Heart left ventricle (tissue), 16 donors: ENCODE measurements at regions of chr1 and their contacts with region 1.

Region 1: GRCh38 chr1:154863315-154864174 is 6.5 kb downstream of the KCNN3 start:
- DNase-seq: peak in 1 of 5 donors; percentile 48
- ATAC-seq: peak in 2 of 4 donors; percentile 53 to 65
- H3K4me3 ChIP-seq: no peak overlapping the region
- H3K27ac ChIP-seq: peak overlapping the region in 1 of 12 donors; percentile 52
- H3K4me1 ChIP-seq: peaks cover 3 to 46% (median 25%) of the 10 kb centered on the region in 12 donors
- H3K27me3 ChIP-seq: peaks cover 0 to 4% (median 0%) of the 10 kb centered on the region in 9 donors
- CTCF ChIP-seq: peak; percentile 32 to 70 (median 56)
- POLR2A ChIP-seq: no peak

Region 2: GRCh38 chr1:154760469-154760933 is 103.0 kb before region 1 on chr1:
- intact Hi-C with region 1: loop called in 3 of 10 experiments (anchors 5 kb)
- DNase-seq: peak; percentile 43 to 88 (median 58)
- ATAC-seq: peak in 3 of 4 donors; percentile 82 to 92 (median 91)
- H3K4me3 ChIP-seq: peak overlapping the region; percentile 13 to 58 (median 44)
- H3K27ac ChIP-seq: peak overlapping the region in 1 of 12 donors; percentile 57
- H3K4me1 ChIP-seq: peaks cover 0 to 29% (median 17%) of the 10 kb centered on the region in 12 donors
- H3K27me3 ChIP-seq: peaks cover 0 to 33% (median 0%) of the 10 kb centered on the region in 9 donors
- CTCF ChIP-seq: peak; percentile 66 to 83 (median 74)
- POLR2A ChIP-seq: no peak

Region 3: DNA sequence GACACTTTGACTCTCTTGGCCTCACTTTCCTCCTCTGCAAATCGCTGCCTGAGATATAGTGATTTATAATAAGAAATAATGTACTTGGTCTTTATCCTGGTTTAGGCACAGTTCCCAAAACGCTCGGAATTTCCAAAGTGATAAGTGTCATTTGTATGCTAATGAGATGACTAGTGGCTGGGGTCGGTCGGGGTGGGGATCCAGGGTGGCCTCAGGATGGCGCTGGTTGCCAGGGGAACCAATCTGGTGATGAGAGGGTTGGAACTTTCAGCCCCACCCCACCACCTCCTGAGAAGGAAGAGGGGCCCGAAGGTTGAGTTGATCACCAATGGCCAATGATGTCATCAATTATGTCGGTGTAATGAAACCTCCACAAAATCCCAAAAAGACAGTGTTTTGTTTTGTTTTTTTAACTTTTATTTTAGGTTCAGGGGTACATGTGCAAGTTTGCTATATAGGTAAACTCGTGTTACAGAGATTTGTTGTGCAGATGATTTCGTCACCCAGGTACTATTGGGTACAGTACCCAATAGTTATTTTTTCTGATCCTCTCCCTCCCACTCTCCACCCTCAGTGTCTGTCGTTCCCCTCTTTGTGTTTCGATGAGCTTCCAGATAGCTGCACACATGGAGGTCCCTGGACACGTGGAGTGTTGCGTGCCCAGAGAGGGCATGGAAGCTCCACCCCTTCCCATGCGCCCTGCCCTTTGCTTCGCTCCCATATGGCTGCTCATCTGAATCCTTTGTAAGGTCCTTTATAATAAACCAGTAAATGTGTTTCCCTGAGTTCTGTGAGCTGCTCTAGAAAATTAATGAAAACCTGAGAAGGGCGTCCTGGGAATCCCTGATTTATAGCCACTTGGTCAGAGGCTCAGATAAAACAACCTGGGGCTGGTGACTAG is 90.7 kb before region 1 on chr1:
- intact Hi-C with region 1: loop called in 3 of 10 experiments (anchors 5 kb)
- DNase-seq: no peak
- ATAC-seq: no peak
- H3K4me3 ChIP-seq: no peak overlapping the region
- H3K27ac ChIP-seq: no peak overlapping the region
- H3K4me1 ChIP-seq: peaks cover 0 to 13% (median 5%) of the 10 kb centered on the region in 12 donors
- H3K27me3 ChIP-seq: no peaks in the 10 kb centered on the region
- CTCF ChIP-seq: peak in 6 of 12 donors; percentile 5 to 17 (median 6)
- POLR2A ChIP-seq: no peak